Gastrocnemius medialis (tissue), 4 donors: ENCODE measurements at regions of chr3 and their contacts with region 1.

Region 1: DNA sequence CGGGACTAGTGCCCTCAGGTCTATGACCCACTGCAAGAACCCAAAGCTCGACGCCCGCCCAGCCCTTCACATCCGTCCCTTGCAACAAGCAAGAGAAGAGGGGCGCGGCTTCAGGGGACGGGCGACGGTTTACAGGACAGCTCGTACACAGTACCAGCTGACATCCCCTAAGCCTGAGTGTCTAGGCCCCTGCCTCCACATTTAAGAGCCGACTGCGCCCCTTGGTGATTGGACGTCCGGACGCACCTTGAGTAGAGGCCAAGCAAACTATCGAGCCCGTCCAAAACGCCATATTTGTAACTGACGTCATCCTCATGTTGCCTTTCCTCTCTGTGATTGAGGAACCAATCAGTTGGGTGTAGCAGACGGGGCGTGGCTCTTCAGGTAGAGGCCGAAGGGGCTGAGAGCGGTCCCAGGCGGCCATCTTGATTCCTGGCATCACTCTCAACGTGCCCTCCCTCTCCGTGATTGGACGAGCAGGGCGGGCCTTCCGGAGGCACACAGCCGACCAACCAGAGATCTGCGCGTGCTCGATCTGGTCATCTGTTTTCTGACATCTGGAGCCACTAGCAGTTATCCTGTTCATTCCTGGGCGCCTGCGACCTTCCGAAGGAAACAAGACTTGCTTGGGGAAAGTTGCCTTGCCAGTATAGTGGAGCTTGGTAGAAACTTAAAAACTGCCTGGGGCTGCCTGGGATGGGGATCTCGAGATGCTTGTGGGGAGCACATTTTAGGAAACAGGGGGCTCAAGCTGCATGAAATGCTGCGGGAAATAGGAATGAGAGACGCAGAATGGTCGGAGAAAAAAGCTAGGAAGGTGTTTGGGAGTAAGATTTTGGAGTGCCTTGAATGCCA is 4.0 kb upstream of the RPL14 start:
- DNase-seq: peak; percentile 99
- ATAC-seq: peak; percentile 92 to 94
- H3K4me3 ChIP-seq: peak overlapping the region; percentile 68 to 91 (median 80)
- H3K27ac ChIP-seq: peak overlapping the region; percentile 88 to 98 (median 94)
- H3K4me1 ChIP-seq: peaks cover 25 to 27% of the 10 kb centered on the region in 2 donors
- H3K27me3 ChIP-seq: no peaks in the 10 kb centered on the region
- CTCF ChIP-seq: no peak
- POLR2A ChIP-seq: peak; percentile 78 to 85

Region 2: GRCh38 chr3:39383045-39383880 is 1069.8 kb before region 1 on chr3 and contains the start of gene SLC25A38:
- in situ Hi-C with region 1: loop called in 1 of 4 experiments (anchors 25 kb)
- intact Hi-C with region 1: no loop called
- DNase-seq: peak; percentile 74 to 76
- ATAC-seq: peak; percentile 76 to 82
- H3K4me3 ChIP-seq: peak within 1 kb of the TSS; percentile 81 to 98 (median 90)
- H3K27ac ChIP-seq: peak within 1 kb of the TSS; percentile 96 to 97 (median 96)
- H3K4me1 ChIP-seq: peaks cover 14 to 20% of the 10 kb centered on the region in 2 donors
- H3K27me3 ChIP-seq: no peaks in the 10 kb centered on the region
- CTCF ChIP-seq: peak in 4 of 5 experiments; percentile 15 to 46 (median 28)
- POLR2A ChIP-seq: peak; percentile 55 to 58
- total RNA-seq, gene SLC25A38: 43.8 to 51.2 (median 48.2) TPM

Region 3: GRCh38 chr3:39473452-39474127 is 979.5 kb before region 1 on chr3:
- in situ Hi-C with region 1: no loop called
- intact Hi-C with region 1: no loop called
- DNase-seq: no peak
- ATAC-seq: no peak
- H3K4me3 ChIP-seq: no peak overlapping the region
- H3K27ac ChIP-seq: no peak overlapping the region
- H3K4me1 ChIP-seq: no peaks in the 10 kb centered on the region
- H3K27me3 ChIP-seq: no peaks in the 10 kb centered on the region
- CTCF ChIP-seq: no peak
- POLR2A ChIP-seq: no peak

Region 4: GRCh38 chr3:40043444-40043755 is 409.7 kb before region 1 on chr3:
- in situ Hi-C with region 1: no loop called
- intact Hi-C with region 1: no loop called
- DNase-seq: no peak
- ATAC-seq: no peak
- H3K4me3 ChIP-seq: no peak overlapping the region
- H3K27ac ChIP-seq: no peak overlapping the region
- H3K4me1 ChIP-seq: no peaks in the 10 kb centered on the region
- H3K27me3 ChIP-seq: no peaks in the 10 kb centered on the region
- CTCF ChIP-seq: no peak
- POLR2A ChIP-seq: no peak

Region 5: GRCh38 chr3:40309418-40309924 is 143.6 kb before region 1 on chr3 and contains the start of gene EIF1B:
- in situ Hi-C with region 1: loop called in 1 of 4 experiments (anchors 5 kb)
- intact Hi-C with region 1: loop called (anchors 1 kb)
- DNase-seq: peak; percentile 96 to 98
- ATAC-seq: peak; percentile 95 to 97
- H3K4me3 ChIP-seq: peak within 1 kb of the TSS; percentile 81 to 100 (median 95)
- H3K27ac ChIP-seq: peak within 1 kb of the TSS; percentile 96 to 99 (median 98)
- H3K4me1 ChIP-seq: peaks cover 41 to 49% of the 10 kb centered on the region in 2 donors
- H3K27me3 ChIP-seq: no peaks in the 10 kb centered on the region
- CTCF ChIP-seq: peak; percentile 80 to 95 (median 88)
- POLR2A ChIP-seq: peak; percentile 98
- total RNA-seq, gene EIF1B: 12.9 to 32.7 (median 24.5) TPM

Region 6: GRCh38 chr3:40329071-40329470 is 124.0 kb before region 1 on chr3:
- in situ Hi-C with region 1: loop called in 2 of 4 experiments (anchors 10 kb)
- intact Hi-C with region 1: loop called (anchors 5 kb)
- DNase-seq: no peak
- ATAC-seq: no peak
- H3K4me3 ChIP-seq: no peak overlapping the region
- H3K27ac ChIP-seq: no peak overlapping the region
- H3K4me1 ChIP-seq: peaks cover 5 to 8% of the 10 kb centered on the region in 2 donors
- H3K27me3 ChIP-seq: no peaks in the 10 kb centered on the region
- CTCF ChIP-seq: no peak
- POLR2A ChIP-seq: no peak

Region 7: GRCh38 chr3:40505599-40506462 is 52.7 kb after region 1 on chr3 and contains the start of gene ZNF620:
- in situ Hi-C with region 1: no loop called
- intact Hi-C with region 1: loop called (anchors 1 kb)
- DNase-seq: peak; percentile 41 to 78
- ATAC-seq: peak; percentile 65 to 91
- H3K4me3 ChIP-seq: peak within 1 kb of the TSS; percentile 64 to 76 (median 70)
- H3K27ac ChIP-seq: peak within 1 kb of the TSS; percentile 77 to 86 (median 82)
- H3K4me1 ChIP-seq: peaks cover 10 to 13% of the 10 kb centered on the region in 2 donors
- H3K27me3 ChIP-seq: no peaks in the 10 kb centered on the region
- CTCF ChIP-seq: peak in 2 of 5 experiments; percentile 21 to 45
- POLR2A ChIP-seq: peak; percentile 32 to 48
- total RNA-seq, gene ZNF620: 0.33 to 4.2 (median 1.9) TPM

Region 8: GRCh38 chr3:41198950-41199865 is 746.1 kb after region 1 on chr3 and contains the start of gene CTNNB1:
- in situ Hi-C with region 1: no loop called
- intact Hi-C with region 1: loop called (anchors 10 kb)
- DNase-seq: peak; percentile 82 to 91
- ATAC-seq: peak; percentile 90 to 93
- H3K4me3 ChIP-seq: peak within 1 kb of the TSS; percentile 89 to 97 (median 94)
- H3K27ac ChIP-seq: peak within 1 kb of the TSS; percentile 95 to 99 (median 98)
- H3K4me1 ChIP-seq: peaks cover 25 to 39% of the 10 kb centered on the region in 2 donors
- H3K27me3 ChIP-seq: no peaks in the 10 kb centered on the region
- CTCF ChIP-seq: peak in 2 of 5 experiments; percentile 23 to 26
- POLR2A ChIP-seq: peak; percentile 93 to 96
- total RNA-seq, gene CTNNB1: 114 to 157 (median 150) TPM

Region 9: DNA sequence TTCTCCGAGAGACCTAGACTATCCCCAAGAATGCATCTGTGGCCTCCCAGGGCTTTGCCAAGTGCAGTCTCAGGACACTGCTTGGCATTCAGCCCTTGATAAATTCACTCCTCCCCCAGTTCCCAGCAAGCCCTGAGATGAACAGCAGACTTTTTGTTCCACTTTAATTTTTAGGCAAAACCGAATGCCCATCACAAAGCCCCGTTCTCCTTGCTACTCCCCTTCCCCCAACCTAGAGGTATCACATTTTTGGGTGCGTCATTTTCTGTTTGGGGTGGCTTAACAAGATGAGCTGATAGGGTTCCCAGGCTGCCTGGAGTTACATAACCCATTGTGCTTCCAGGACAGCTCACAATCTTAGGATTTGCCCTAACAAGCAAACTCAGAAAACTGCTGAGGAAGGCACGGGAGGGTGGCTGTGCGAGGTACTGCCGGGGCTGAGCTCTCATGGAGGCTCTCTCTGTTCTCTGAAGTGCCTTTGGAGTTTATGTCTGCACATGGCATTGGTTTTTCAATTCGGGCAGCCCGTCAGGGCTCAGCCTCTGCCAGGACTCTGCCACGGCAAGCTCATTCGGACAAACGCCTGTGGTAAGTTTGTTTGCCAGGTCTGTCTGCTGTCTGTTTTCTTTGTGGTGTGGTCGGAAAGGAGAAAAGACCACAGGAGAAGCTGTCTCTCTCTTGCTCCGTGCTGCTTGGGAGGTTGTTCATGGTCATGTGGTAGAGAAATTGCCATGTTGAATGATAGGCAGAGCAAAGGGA is 1638.0 kb after region 1 on chr3 and contains the start of gene TRAK1:
- in situ Hi-C with region 1: no loop called
- intact Hi-C with region 1: loop called (anchors 10 kb)
- DNase-seq: peak; percentile 39 to 53
- ATAC-seq: peak; percentile 76 to 77
- H3K4me3 ChIP-seq: peak within 1 kb of the TSS; percentile 33 to 43 (median 38)
- H3K27ac ChIP-seq: peak within 1 kb of the TSS; percentile 80 to 86 (median 84)
- H3K4me1 ChIP-seq: peaks cover 29 to 37% of the 10 kb centered on the region in 2 donors
- H3K27me3 ChIP-seq: no peaks in the 10 kb centered on the region
- CTCF ChIP-seq: no peak
- POLR2A ChIP-seq: no peak
- total RNA-seq, gene TRAK1: 59.5 to 109 (median 98.6) TPM